Activated CD8-positive, alpha-beta memory T cell treated with anti-CD3 and anti-CD28 coated beads, Interleukin-2, amount 10 ng/mL, durations not matched to agents 7 days and 5 days (primary cell): ENCODE measurements at regions of chr14 and their contacts with region 1.

Region 1: GRCh38 chr14:22929104-22929847 is at the start of gene PRMT5:
- DNase-seq: peak; percentile 98
- ATAC-seq: peak; percentile 97
- H3K4me3 Mint-ChIP-seq: no peak within 1 kb of the TSS
- H3K27ac Mint-ChIP-seq: no peak within 1 kb of the TSS
- H3K4me1 Mint-ChIP-seq: peaks cover 32% of the 10 kb centered on the region
- H3K27me3 Mint-ChIP-seq: no peaks in the 10 kb centered on the region
- total RNA-seq, gene PRMT5: 49.2 to 84.0 TPM

Region 2: DNA sequence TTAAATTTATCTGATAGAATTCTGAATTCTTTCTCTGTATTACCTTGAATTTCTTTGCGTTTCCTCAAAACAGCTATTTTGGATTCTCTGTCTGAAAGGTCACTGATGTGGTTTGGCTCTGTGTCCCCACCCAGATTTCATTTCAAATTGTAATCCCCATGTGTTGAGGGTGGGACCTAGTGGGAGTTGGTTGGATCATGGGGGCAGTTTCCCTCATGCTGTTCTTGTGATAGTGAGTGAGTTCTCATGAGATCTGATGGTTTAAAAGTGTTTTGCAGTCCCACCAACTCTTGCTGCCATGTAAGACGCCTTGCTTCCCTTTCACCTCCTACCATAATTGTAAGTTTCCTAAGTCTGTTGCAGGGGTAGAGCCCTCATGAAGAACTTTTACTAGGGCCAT is 251.1 kb before region 1 on chr14:
- CTCF ChIA-PET with region 1: no interaction called
- DNase-seq: no peak
- ATAC-seq: no peak
- H3K4me3 Mint-ChIP-seq: no peak overlapping the region
- H3K27ac Mint-ChIP-seq: no peak overlapping the region
- H3K4me1 Mint-ChIP-seq: no peaks in the 10 kb centered on the region
- H3K27me3 Mint-ChIP-seq: peaks cover 49% of the 10 kb centered on the region

Region 3: GRCh38 chr14:22737052-22737451 is 192.2 kb before region 1 on chr14:
- CTCF ChIA-PET with region 1: no interaction called
- DNase-seq: peak; percentile 68
- ATAC-seq: peak; percentile 98
- H3K4me3 Mint-ChIP-seq: no peak overlapping the region
- H3K27ac Mint-ChIP-seq: peak overlapping the region; percentile 82
- H3K4me1 Mint-ChIP-seq: peaks cover 24% of the 10 kb centered on the region
- H3K27me3 Mint-ChIP-seq: peaks cover 3% of the 10 kb centered on the region

Region 4: GRCh38 chr14:22872033-22872832 is 57.0 kb before region 1 on chr14:
- CTCF ChIA-PET with region 1: interaction called, 18 read pairs
- DNase-seq: peak; percentile 80
- ATAC-seq: peak; percentile 43
- H3K4me3 Mint-ChIP-seq: peak overlapping the region; percentile 88
- H3K27ac Mint-ChIP-seq: peak overlapping the region; percentile 98
- H3K4me1 Mint-ChIP-seq: peaks cover 32% of the 10 kb centered on the region
- H3K27me3 Mint-ChIP-seq: no peaks in the 10 kb centered on the region

Region 5: DNA sequence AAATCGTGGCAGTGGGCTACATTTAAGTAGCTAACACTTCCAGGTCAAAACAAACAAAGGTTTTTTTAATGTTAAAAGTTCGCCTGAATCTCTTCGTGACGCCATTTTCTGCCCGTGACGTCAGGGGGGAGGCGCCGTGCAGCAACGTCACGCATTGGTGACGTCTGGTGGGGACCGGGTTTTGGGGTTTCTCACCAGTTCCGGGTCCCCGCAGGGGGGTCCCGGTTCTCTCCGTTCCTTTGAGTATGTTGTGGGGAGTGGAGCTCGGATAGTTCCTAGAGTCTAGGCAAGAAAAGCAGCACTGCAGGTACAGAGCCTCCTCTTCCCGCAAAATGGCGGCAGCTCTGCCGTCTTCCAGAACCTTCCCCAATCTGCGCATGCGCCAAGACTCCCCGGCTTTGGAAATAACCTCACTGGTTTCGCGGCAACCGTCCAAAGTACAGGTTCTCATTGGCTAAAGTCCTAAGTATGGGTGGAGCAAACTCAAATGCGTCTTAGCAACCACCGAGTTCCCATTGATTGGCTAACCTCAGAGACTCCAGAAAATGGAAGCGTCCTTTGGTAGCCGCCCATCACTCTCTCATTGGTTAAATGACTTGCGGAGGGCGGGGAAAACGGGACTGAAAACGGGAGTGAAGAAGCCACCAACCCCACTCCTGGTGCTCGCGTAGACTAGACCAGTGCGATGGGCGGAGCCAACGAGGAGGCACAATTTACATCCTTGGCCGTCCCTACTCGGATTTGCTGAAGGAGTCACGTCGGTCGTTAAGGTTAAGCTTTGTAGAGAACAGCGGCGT is 10.3 kb before region 1 on chr14 and contains the start of gene RBM23:
- CTCF ChIA-PET with region 1: interaction called, 58 read pairs
- DNase-seq: peak; percentile 100
- ATAC-seq: peak; percentile 89
- H3K4me3 Mint-ChIP-seq: peak within 1 kb of the TSS; percentile 88
- H3K27ac Mint-ChIP-seq: peak within 1 kb of the TSS; percentile 99
- H3K4me1 Mint-ChIP-seq: peaks cover 22% of the 10 kb centered on the region
- H3K27me3 Mint-ChIP-seq: no peaks in the 10 kb centered on the region
- total RNA-seq, gene RBM23: 82.9 to 96.7 TPM

Region 6: DNA sequence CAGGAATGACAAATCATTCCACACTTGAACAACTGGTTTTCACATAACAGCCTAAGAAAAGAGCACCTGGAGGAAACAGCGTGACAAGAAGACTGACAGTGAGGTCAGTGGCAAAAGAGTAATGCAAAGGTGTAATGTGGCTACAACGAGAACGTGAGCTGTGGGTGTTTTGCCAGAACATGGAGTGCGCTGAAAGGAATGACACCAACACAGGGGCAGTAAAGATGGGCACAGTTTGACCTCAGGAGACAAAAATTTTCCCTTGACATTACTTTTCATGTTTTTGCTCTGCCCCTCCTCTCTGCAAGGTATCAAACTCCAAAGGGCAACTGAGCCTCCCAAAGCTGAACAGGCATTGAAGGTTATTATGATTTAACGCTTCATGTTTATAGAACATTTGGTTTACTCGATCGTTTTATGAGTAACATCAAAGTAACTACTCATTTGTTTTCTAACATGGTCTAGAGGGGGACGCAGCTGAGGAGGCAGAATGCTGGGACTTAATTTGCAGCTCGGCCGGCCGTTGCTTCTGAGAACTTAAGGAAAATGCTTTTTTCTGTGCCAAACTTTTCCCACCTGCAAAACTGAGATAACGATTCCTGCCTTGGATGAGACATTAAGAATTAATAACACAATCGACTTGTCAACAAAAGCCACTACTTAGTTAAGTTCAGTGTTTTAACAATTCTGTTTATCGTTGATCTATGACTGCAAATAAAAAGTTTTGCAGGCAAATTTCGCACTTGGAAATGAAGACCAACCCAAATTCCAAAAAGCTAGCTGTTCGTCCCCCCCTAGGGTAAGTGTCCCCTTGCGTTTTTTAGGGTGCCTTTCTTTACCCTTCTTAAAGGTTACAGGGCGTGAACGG is 26.7 kb after region 1 on chr14:
- CTCF ChIA-PET with region 1: interaction called, 19 read pairs
- DNase-seq: no peak
- ATAC-seq: no peak
- H3K4me3 Mint-ChIP-seq: peak overlapping the region; percentile 94
- H3K27ac Mint-ChIP-seq: peak overlapping the region; percentile 88
- H3K4me1 Mint-ChIP-seq: peaks cover 34% of the 10 kb centered on the region
- H3K27me3 Mint-ChIP-seq: peaks cover 4% of the 10 kb centered on the region

Region 7: DNA sequence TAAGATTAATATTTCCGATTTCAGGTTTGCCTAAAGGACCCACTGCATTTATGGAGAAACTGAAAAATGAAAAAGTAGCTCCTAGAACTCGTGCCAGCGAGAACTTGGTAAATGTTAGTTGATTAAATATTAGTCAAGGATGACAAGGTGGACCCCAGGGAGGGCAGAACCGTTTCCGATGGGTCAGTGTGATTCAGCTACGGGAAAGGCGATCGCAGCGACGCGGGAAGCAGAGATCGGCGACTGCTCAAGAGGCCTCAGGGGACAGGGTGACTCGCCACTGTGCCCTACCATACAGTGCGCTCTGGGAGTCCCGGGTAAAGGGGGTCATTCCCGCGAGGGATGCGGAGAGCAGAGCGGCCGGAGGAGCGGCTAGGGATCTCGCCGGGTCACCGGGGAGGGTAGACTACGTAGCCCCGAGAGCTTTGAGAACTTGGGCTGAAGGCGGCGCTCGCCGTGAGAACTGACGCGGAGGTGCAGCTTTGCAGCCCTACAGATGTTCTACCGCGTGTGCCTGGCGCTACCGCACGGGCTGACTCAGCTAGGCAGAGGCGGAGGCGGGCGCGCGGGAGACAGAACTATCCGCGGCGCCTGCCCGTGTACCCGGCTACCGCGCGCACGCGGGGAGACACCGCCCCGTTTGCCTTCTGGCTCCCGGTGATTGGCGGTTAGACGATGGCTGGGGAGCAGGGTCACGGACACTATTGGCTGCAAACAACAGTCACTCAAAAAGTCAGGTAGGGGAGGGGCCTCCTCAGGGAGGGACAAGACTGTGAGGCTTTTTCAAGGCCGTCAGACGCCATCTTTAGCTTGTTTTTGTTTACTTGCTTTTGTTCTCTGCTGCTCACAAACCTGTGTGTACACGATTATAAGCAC is 77.5 kb after region 1 on chr14:
- CTCF ChIA-PET with region 1: interaction called, 18 read pairs
- DNase-seq: peak; percentile 98
- ATAC-seq: peak; percentile 97
- H3K4me3 Mint-ChIP-seq: peak overlapping the region; percentile 93
- H3K27ac Mint-ChIP-seq: peak overlapping the region; percentile 96
- H3K4me1 Mint-ChIP-seq: peaks cover 44% of the 10 kb centered on the region
- H3K27me3 Mint-ChIP-seq: no peaks in the 10 kb centered on the region

Region 8: GRCh38 chr14:23121361-23121771 is 192.1 kb after region 1 on chr14:
- CTCF ChIA-PET with region 1: no interaction called
- DNase-seq: peak; percentile 51
- ATAC-seq: no peak
- H3K4me3 Mint-ChIP-seq: no peak overlapping the region
- H3K27ac Mint-ChIP-seq: peak overlapping the region; percentile 91
- H3K4me1 Mint-ChIP-seq: peaks cover 34% of the 10 kb centered on the region
- H3K27me3 Mint-ChIP-seq: no peaks in the 10 kb centered on the region

Region 9: DNA sequence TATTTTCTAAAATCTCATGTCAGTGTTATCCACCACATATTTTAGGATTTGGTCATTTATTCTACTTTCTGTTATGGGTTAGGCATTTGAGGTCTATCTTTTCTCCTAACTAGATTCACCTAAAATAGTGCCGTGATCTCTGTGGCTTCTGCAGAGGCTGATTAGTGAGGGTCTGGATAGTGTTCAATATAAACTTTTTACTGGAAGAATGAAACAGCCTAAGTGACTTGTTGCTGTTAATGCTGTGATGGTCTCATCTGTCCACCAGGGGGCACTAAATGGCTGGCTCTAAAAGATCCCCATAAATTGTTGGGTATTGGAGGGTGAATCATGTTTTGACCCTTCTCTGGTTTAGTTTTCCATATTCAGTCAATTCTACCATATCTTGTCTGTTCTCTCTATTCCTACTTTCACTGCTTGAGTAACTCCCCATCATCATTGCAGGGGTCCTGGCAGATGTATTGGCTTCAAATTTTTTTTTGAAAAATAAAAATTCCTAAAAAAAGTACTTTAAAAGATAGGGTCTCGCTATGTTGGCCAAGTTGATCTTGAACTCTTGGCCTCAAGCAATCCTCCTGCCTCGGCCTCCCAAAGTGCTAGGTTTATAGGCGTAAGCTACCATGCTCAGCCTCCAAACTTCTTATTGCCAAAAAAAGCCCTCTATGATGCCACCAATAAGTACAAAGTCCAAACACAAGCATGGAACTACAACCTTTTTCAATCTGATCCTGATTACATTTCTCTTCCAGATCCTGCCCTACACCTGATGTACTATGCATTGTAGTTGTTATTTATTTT is 398.9 kb after region 1 on chr14:
- CTCF ChIA-PET with region 1: no interaction called
- DNase-seq: peak; percentile 76
- ATAC-seq: peak; percentile 67
- H3K4me3 Mint-ChIP-seq: no peak overlapping the region
- H3K27ac Mint-ChIP-seq: no peak overlapping the region
- H3K4me1 Mint-ChIP-seq: peaks cover 10% of the 10 kb centered on the region
- H3K27me3 Mint-ChIP-seq: no peaks in the 10 kb centered on the region